MCF 10A (cell line): ENCODE measurements at regions of chrX and their contacts with region 1.

Region 1: DNA sequence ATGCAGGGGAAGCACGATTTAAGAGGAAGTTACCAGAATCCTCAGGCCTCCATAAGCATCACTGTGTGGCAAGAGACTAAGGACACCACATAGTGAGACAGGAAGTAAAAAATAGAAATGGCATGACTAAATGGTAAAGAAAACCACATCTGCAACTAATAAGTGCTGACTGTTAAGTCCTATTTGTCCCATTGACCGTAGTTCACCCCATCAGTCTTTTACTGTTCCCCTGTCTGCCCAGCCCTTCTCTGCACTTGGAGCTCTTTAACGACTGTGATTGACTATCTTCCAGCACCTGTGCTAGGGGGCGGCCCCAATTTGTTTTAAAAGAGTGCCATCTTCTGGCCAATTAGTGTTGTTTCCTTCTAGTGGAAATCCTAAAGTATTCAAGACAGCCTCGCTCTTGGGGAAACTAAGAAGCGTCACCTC is 94.2 kb downstream of the MAOA start:
- DNase-seq: peak; percentile 82
- H3K4me3 Mint-ChIP-seq: no peak overlapping the region
- H3K27ac Mint-ChIP-seq: no peak overlapping the region
- H3K4me1 Mint-ChIP-seq: peaks cover 8% of the 10 kb centered on the region
- H3K27me3 Mint-ChIP-seq: peaks cover 68% of the 10 kb centered on the region
- CTCF ChIP-seq: peak; percentile 66

Region 2: GRCh38 chrX:41781502-41781901 is 1968.8 kb before region 1 on chrX:
- CTCF ChIA-PET with region 1: no interaction called
- POLR2A ChIA-PET with region 1: no interaction called
- intact Hi-C with region 1: loop called (anchors 5 kb)
- DNase-seq: peak; percentile 47
- H3K4me3 Mint-ChIP-seq: no peak overlapping the region
- H3K27ac Mint-ChIP-seq: no peak overlapping the region
- H3K4me1 Mint-ChIP-seq: peaks cover 7% of the 10 kb centered on the region
- H3K27me3 Mint-ChIP-seq: peaks cover 21% of the 10 kb centered on the region
- CTCF ChIP-seq: peak; percentile 65

Region 3: GRCh38 chrX:43349363-43349762 is 400.9 kb before region 1 on chrX:
- CTCF ChIA-PET with region 1: no interaction called
- POLR2A ChIA-PET with region 1: no interaction called
- intact Hi-C with region 1: loop called (anchors 1 kb)
- DNase-seq: peak; percentile 70
- H3K4me3 Mint-ChIP-seq: no peak overlapping the region
- H3K27ac Mint-ChIP-seq: no peak overlapping the region
- H3K4me1 Mint-ChIP-seq: no peaks in the 10 kb centered on the region
- H3K27me3 Mint-ChIP-seq: peaks cover 87% of the 10 kb centered on the region
- CTCF ChIP-seq: peak; percentile 80

Region 4: DNA sequence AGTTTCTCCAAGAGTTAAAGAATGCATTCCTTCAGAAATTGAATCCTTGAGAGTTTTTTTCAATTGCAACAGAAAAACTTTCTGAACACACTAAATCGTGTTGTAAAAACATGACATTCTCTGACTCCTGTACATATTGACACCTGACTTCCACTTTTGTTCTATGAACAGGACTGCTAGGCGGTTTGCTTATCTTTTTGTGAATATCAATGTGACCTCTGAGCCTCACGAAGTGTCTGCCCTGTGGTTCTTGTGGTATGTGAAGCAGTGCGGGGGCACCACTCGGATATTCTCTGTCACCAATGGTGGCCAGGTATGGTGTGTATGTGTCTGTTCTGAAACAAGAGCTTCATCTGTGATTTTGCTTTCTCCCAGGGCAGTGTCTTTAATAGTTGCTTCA is 22.3 kb before region 1 on chrX:
- CTCF ChIA-PET with region 1: no interaction called
- POLR2A ChIA-PET with region 1: no interaction called
- intact Hi-C with region 1: no loop called
- DNase-seq: no peak
- H3K4me3 Mint-ChIP-seq: no peak overlapping the region
- H3K27ac Mint-ChIP-seq: no peak overlapping the region
- H3K4me1 Mint-ChIP-seq: no peaks in the 10 kb centered on the region
- H3K27me3 Mint-ChIP-seq: peaks cover 71% of the 10 kb centered on the region
- CTCF ChIP-seq: no peak

Region 5: GRCh38 chrX:43939187-43939926 is 189.1 kb after region 1 on chrX:
- CTCF ChIA-PET with region 1: no interaction called
- POLR2A ChIA-PET with region 1: no interaction called
- intact Hi-C with region 1: loop called (anchors 5 kb)
- DNase-seq: peak; percentile 16
- H3K4me3 Mint-ChIP-seq: no peak overlapping the region
- H3K27ac Mint-ChIP-seq: no peak overlapping the region
- H3K4me1 Mint-ChIP-seq: no peaks in the 10 kb centered on the region
- H3K27me3 Mint-ChIP-seq: peaks cover 71% of the 10 kb centered on the region
- CTCF ChIP-seq: peak; percentile 14

Region 6: GRCh38 chrX:44314259-44314734 is 564.0 kb after region 1 on chrX:
- CTCF ChIA-PET with region 1: no interaction called
- POLR2A ChIA-PET with region 1: no interaction called
- intact Hi-C with region 1: no loop called
- DNase-seq: no peak
- H3K4me3 Mint-ChIP-seq: no peak overlapping the region
- H3K27ac Mint-ChIP-seq: no peak overlapping the region
- H3K4me1 Mint-ChIP-seq: no peaks in the 10 kb centered on the region
- H3K27me3 Mint-ChIP-seq: peaks cover 52% of the 10 kb centered on the region
- CTCF ChIP-seq: no peak